ENCODE measurements at regions of chr17 and their contacts with region 1.

Region 1: DNA sequence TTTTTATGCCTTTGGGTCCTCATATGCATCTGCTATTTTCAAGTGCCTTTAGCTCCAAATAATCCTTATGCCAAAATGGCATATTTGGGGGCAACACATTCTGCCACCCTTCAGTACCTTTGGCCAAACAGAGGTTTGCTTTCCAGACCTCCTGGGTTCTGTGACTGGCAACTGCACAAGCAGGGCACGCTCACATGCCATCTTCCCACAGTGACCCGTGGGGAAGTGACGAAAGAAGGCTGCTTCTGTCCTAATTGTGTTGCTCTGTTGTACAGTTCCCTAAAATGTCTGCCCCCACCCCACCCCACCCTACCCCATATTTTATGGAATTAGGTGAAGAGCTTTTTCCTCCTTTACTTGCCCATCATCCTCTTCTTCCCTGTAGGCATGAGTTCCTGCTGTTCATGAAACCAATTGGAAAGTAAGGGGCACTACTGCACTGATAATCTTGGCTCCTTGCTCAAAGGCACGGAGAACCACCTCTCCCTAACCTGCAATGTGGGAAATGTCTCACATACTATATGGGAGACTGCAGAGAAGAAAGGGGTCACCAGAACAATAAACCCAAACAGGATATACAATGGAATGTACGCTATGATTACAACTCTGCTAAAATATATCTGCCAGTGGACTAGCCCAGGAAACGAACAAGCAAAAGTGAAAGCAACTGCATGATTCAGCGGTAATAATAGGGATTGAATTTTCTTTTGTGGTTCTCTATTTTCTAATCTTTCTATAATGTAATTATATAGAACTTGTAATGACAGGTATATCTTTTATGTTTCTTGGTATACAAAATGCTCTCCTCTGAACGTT is 3.3 kb upstream of the SLFN12L start:
- DNase-seq: no peak
- H3K4me3 ChIP-seq: no peak overlapping the region
- CTCF ChIP-seq: no peak

Region 2: DNA sequence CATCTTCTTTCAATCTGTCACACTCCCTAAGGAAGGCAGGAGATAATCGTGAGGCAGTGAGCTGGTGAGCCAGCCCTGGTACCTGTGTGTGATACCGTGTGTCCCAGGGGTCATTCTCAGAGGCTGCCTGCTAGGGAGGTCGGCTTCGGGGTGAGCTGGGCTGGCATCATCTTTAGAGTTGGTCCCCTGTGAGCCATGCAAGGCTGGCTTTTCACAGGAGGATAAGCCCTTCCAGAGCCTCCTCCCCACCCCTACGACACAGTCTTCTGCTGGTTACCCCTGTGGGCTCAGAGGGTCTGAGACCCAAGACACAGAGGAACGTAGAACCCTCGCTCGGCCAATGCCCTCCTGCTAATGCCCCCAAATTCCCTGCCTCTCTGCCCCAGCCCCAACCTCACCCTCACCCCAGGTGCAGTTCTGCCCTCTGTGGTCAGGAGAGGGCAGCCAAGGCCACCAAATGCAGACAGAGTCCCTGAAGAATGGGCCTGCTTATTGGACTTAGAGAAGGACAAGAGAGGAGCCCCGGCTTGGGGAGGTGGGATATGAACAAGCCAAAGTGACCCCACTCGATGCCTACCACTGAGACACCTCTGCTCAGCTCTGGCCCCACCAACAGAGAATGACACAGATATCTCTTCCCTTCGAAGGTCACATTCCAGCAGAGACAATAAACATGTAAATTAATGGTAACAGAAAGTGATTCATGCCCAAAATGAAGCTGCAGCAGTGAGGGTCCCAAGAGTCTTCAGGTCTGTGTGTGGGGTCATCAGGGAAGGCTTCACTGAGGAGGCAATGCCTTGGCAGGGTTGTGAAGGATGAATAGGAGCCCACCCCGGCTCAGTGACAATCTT is 1097.0 kb before region 1 on chr17:
- in situ Hi-C with region 1: loop called (anchors 25 kb)
- DNase-seq: no peak
- H3K4me3 ChIP-seq: no peak overlapping the region
- CTCF ChIP-seq: no peak

Region 3: GRCh38 chr17:35141681-35142466 is 398.9 kb before region 1 on chr17 and contains the start of gene NLE1:
- in situ Hi-C with region 1: loop called (anchors 25 kb)
- DNase-seq: peak; percentile 48
- H3K4me3 ChIP-seq: peak within 1 kb of the TSS; percentile 95
- CTCF ChIP-seq: peak; percentile 93

Region 4: GRCh38 chr17:35312790-35313711 is 227.7 kb before region 1 on chr17:
- in situ Hi-C with region 1: loop called (anchors 10 kb)
- DNase-seq: peak; percentile 70
- H3K4me3 ChIP-seq: no peak overlapping the region
- CTCF ChIP-seq: peak; percentile 68

Region 5: GRCh38 chr17:35605678-35606077 is 64.9 kb after region 1 on chr17:
- in situ Hi-C with region 1: no loop called
- DNase-seq: no peak
- H3K4me3 ChIP-seq: no peak overlapping the region
- CTCF ChIP-seq: no peak

Measured in astrocyte of the cerebellum (primary cell).